ENCODE measurements at regions of chr17 and their contacts with region 1.

Region 1: DNA sequence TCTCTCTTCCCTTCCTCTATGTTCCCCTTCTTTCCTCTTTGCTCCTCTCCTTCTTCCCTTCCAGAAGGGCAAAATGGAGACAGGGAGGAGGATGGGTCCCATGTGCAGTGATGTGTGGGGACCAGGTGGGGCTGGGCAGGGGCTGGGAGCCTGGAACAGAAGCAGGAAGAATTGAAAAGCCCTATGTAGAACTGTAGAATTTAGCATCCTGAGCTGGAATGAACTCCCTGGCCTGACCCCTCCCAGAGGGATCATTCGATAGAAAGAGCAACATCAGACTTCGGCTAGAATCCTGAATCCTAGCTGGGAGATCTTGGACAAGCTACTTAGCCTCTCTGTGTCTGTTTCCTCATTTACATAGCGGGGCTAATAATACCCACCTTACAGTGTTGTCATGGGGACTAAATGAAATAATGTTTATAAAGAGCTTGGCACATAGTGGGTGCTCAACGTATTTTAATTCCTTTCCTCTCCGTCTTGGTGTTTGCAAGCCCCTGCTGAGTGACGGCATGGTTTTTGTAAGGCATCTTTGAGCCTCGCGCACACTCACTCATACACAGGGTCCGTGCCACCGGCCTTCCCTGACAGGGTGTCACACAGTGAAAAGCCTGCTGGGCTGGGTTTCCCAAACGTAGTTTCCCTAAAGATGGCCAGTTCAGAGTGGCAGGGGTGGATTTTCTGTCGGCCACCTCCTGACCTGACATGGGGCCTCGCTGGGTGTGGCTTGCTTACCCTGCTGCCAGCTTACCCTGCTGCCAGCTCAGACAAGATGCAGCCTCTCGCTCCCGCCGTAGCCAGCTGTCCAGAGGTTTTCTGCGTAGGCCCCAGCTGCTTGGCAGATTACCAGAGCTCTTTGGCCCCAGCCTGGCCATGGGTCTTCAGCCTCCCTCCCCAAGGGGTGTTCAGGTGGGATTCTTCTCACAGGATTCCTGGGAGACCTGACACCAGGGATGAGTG is 6.1 kb upstream of the ARHGAP23 start:
- DNase-seq: no peak
- H3K4me3 Mint-ChIP-seq: no peak overlapping the region
- H3K27ac Mint-ChIP-seq: no peak overlapping the region
- H3K4me1 Mint-ChIP-seq: peaks cover 4% of the 10 kb centered on the region
- H3K27me3 Mint-ChIP-seq: peaks cover 49% of the 10 kb centered on the region

Region 2: GRCh38 chr17:38485146-38485468 is 63.0 kb after region 1 on chr17:
- intact Hi-C with region 1: loop called (anchors 2 kb)
- DNase-seq: no peak
- H3K4me3 Mint-ChIP-seq: no peak overlapping the region
- H3K27ac Mint-ChIP-seq: no peak overlapping the region
- H3K4me1 Mint-ChIP-seq: peaks cover 5% of the 10 kb centered on the region
- H3K27me3 Mint-ChIP-seq: peaks cover 4% of the 10 kb centered on the region

Region 3: GRCh38 chr17:38498186-38498752 is 76.1 kb after region 1 on chr17:
- intact Hi-C with region 1: loop called (anchors 2 kb)
- DNase-seq: no peak
- H3K4me3 Mint-ChIP-seq: no peak overlapping the region
- H3K27ac Mint-ChIP-seq: no peak overlapping the region
- H3K4me1 Mint-ChIP-seq: no peaks in the 10 kb centered on the region
- H3K27me3 Mint-ChIP-seq: no peaks in the 10 kb centered on the region

Measured in activated T-helper 2 cell treated with anti-CD3 and anti-CD28 coated beads, Interferon-gamma antibody, Interleukin-2, Interleukin-4, amounts not matched to agents 10 μg/mL and 5 μg/mL and 100 μg/mL, durations not matched to agents 14 hours and 24 hours and 36 hours (primary cell).